ENCODE measurements at regions of chr5 and their contacts with region 1.

Region 1: DNA sequence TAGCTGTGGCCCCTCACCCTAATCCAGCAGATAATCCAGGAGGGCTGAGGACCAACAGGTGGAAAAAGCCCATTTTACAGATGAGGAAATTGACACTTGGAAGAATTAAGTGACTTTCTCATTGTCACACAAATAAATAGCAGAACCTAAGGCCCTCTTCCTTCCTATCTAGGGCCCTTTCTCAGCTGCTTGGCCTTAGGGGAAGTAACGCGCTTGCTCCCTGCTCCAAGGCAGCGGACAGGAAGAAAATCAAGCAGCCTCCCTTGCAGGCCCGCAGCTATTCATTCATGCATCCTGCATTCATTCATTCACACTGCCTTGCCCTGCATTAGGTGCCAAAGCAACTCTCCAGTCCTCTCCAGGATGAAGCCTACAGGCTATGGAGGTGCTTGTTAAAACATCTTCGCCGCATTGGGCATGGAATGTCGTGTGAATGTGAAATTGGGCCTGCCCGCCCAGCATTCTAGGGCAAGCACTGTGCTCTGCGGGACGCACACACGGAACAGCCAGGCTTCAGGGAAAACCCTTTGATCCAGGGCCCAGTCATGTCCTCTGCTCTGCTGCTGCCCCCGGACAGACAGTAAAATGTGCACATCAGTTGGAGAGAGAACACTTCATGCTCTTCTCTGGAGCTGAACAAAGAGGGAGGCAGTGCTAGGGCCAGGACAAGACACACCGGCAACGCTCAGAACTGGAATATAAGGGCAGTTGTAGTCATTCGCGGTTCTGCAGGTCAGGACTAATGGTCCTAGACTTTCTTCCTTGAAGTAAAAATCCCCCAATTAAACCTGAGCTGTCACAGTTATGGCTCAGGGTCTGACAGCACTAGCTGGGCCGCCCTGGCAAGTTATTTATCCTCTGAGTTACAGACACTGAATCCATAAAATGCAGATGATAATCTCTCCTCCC is 166.0 kb downstream of the COL23A1 start:
- DNase-seq: peak in 1 of 2 experiments; percentile 38
- H3K4me3 ChIP-seq: no peak overlapping the region
- H3K27ac ChIP-seq: no peak overlapping the region
- H3K4me1 ChIP-seq: peaks cover 16 to 35% (median 21%) of the 10 kb centered on the region in 4 experiments
- H3K27me3 ChIP-seq: no peaks in the 10 kb centered on the region
- CTCF ChIP-seq: no peak
- EP300 ChIP-seq: no peak
- POLR2A ChIP-seq: no peak
- RAD21 ChIP-seq: no peak

Region 2: GRCh38 chr5:178434851-178435250 is 10.7 kb after region 1 on chr5:
- CTCF ChIA-PET with region 1: interaction called, 15 read pairs
- POLR2A ChIA-PET with region 1: no interaction called
- DNase-seq: no peak
- H3K4me3 ChIP-seq: no peak overlapping the region
- H3K27ac ChIP-seq: no peak overlapping the region
- H3K4me1 ChIP-seq: peaks cover 0 to 4% (median 0%) of the 10 kb centered on the region in 4 experiments; a peak in 1 of 7 replicates
- H3K27me3 ChIP-seq: no peaks in the 10 kb centered on the region
- CTCF ChIP-seq: no peak
- EP300 ChIP-seq: no peak
- POLR2A ChIP-seq: no peak
- RAD21 ChIP-seq: no peak

Measured in H1 (cell line).